Colonic mucosa (tissue), 4 donors: ENCODE measurements at regions of chr17 and their contacts with region 1.

Region 1: GRCh38 chr17:1186923-1187771 is 7.4 kb upstream of the ABR start:
- DNase-seq: peak; percentile 79
- H3K4me3 ChIP-seq: no peak overlapping the region
- H3K27ac ChIP-seq: no peak overlapping the region
- H3K4me1 ChIP-seq: no peaks in the 10 kb centered on the region
- H3K27me3 ChIP-seq: no peaks in the 10 kb centered on the region
- CTCF ChIP-seq: peak; percentile 99

Region 2: GRCh38 chr17:1122533-1123392 is 64.4 kb before region 1 on chr17:
- intact Hi-C with region 1: loop called (anchors 5 kb)
- DNase-seq: peak; percentile 97
- H3K4me3 ChIP-seq: no peak overlapping the region
- H3K27ac ChIP-seq: peak overlapping the region; percentile 80
- H3K4me1 ChIP-seq: peaks cover 19% of the 10 kb centered on the region
- H3K27me3 ChIP-seq: no peaks in the 10 kb centered on the region
- CTCF ChIP-seq: peak; percentile 90

Region 3: DNA sequence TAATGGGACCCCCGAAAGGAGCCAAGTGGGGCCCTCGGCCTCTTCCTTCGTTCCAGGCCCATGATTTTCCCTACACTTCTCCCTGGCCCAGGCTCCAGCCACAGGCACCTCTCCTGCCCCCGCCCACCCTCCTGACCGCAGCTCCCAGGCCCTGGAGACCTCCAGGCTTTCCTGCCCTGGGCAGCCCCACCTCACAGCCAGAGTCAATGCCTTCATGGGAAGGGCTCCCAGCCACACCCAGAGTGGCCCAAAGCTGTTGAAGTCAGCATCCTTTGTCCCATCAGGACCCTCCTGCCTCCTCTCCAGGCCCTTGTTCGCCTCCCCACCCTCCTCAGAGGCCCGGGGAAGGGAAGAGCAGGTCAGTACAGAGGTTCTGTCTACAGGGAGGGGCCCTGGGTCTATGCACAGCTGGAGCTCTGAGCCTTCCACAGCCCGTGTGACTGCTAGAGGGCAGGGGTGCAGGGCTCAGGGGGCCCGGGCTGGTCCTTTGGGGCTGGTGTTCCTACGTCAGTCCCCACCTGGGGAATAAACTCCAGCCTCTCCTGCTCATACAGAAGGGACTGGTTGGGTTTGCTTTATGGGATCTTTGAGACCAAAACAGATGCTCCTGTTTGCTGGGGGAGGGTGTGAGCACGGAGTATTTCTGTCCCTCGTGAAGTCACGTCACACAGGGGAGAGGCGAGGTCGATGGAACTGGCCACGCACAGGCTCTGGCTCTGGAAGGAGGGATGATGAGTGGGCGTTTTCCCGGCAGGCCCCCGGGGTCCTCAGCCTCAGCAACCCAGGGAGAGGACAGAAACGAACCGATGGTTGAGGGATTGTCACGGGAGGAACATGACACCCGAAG is 112.6 kb after region 1 on chr17:
- intact Hi-C with region 1: no loop called
- DNase-seq: no peak
- H3K4me3 ChIP-seq: no peak overlapping the region
- H3K27ac ChIP-seq: no peak overlapping the region
- H3K4me1 ChIP-seq: no peaks in the 10 kb centered on the region
- H3K27me3 ChIP-seq: no peaks in the 10 kb centered on the region
- CTCF ChIP-seq: no peak